Posterior vena cava (tissue), 2 donors: ENCODE measurements at regions of chr19 and their contacts with region 1.

Region 1: GRCh38 chr19:16668176-16668575 is 7.2 kb downstream of the TMEM38A start:
- DNase-seq: no peak

Region 2: DNA sequence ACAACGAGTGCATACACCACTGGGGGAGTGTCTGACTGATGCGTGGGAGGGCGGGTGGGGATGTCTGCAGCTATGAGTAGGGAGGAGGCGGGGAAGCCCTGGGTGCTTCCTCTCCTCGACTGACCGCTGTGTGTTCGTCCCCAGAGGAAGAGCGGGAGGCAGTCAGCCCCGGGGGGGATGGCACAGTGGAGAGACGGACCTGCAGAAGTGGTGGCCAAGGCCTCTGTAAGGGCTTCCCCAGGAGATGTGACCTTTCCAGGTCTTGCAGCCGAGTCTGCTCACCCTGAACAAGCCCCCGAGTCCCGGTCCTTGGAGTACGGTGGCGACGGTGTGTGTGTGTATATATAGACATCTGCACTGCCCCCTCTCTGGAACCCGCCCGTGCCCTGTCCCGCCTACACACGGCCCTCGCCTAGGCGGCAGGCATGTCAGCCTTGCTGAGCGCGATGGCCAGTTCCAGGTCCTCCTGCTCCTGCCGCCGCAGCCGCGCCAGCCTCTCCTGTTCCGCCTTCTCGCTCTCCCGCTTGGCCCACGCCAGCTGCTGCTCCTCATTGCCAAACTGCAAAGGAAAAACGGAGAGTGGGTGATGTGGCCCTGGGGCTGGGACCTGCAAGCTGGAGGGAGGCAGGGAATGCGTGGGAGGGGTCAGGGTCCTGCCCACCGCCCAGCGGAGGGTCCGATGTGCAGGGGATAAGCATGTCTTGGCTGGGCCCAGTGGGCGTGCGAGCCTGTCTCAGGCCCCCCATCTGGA is 312.7 kb before region 1 on chr19:
- intact Hi-C with region 1: loop called in 1 of 2 experiments (anchors 5 kb)
- DNase-seq: peak; percentile 80

Region 3: DNA sequence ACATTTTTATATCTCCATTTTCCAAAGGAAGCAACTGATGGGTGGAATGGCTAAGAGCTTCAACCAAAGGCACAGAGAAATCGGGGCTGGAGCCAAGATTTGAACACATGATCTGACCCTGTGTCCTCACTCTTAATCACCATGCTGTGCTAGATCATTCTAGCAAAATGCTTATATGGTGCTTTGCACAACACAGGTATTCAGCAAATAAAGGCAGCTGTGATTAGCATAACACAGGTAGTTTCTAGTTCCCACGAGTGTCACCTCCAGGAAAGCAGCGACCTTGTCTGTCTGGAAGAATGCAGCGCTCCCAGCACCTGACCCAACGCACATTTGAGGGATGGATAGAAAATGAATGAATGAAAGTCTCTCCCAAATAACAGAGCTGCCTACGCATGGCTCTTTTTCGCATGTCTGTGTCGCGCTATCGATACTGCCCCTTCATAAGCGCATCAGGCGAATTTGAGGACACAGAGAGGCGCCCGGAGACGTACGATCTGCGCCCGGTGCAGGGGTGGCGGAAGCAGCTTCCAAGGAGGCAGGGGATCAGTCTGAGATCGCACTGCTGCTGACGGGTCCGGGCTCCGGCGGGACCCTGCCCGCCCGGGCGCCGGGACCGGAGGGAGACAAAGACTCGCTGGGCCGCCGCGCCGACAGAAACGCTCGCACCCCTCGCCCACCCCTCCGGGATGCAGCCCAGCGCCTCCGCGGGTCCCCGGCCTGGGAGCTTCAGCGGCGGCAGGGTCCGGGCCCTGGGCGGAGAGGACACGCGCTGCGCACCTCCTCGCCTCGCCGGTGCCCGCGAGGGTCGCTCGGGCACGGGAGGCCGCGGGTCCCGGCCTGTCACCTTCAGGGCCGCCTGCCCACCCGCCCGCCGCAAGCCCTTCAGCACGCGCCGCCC is 197.0 kb before region 1 on chr19:
- intact Hi-C with region 1: no loop called
- DNase-seq: no peak

Region 4: GRCh38 chr19:16654140-16654539 is 14.0 kb before region 1 on chr19:
- intact Hi-C with region 1: no loop called
- DNase-seq: no peak

Region 5: GRCh38 chr19:16698914-16699313 is 30.7 kb after region 1 on chr19:
- intact Hi-C with region 1: no loop called
- DNase-seq: no peak

Region 6: GRCh38 chr19:16751733-16752132 is 83.6 kb after region 1 on chr19:
- intact Hi-C with region 1: no loop called
- DNase-seq: no peak